ENCODE measurements at regions of chr2 and their contacts with region 1.

Region 1: DNA sequence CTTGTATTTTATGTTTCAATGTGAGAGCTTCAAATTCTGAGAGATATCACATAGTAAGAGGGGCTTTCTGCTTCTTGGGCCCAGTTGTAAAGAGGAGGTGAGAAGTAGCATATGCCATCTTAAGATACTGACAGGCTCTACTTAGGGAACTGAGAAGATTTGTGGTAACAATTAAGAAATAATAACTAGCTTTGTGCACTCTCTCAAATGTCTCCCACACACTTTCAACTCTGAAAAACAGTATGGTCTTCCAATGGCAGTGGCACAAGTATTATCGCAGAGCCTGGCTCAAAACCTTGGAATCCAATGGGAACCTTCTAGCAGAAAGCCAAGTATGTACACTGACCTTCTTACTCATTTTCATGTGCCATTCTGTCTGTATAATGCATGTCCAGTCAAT is 80.3 kb upstream of the FAM237A start:
- DNase-seq: no peak
- H3K4me3 ChIP-seq: no peak overlapping the region
- H3K27ac ChIP-seq: no peak overlapping the region
- H3K4me1 ChIP-seq: peaks cover 41% of the 10 kb centered on the region
- H3K27me3 ChIP-seq: no peaks in the 10 kb centered on the region
- CTCF ChIP-seq: no peak

Region 2: GRCh38 chr2:206392118-206392517 is 169.8 kb before region 1 on chr2:
- CTCF ChIA-PET with region 1: no interaction called
- POLR2A ChIA-PET with region 1: no interaction called
- intact Hi-C with region 1: loop called (anchors 1 kb)
- DNase-seq: peak; percentile 24 to 49
- H3K4me3 ChIP-seq: no peak overlapping the region
- H3K27ac ChIP-seq: no peak overlapping the region
- H3K4me1 ChIP-seq: no peaks in the 10 kb centered on the region
- H3K27me3 ChIP-seq: no peaks in the 10 kb centered on the region
- CTCF ChIP-seq: peak; percentile 65

Region 3: DNA sequence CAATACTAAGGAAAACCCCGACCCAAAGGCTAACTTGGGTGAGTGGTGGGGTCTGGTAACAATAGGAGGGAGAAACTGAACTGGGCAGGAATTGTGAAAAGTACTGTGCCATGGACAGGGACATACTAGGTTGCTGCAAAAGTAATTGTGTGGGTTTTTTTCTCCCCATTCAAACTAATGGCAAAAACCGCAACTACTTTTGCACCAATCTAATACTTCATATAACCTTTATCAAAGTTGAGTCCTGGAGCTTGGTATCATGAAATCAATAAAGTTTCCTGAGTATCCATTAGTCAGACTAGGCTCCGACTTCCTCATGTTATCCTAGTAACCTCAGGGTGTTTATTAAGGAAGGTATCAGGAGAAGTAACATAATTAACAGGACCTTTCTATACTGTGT is 155.5 kb before region 1 on chr2:
- CTCF ChIA-PET with region 1: no interaction called
- POLR2A ChIA-PET with region 1: no interaction called
- intact Hi-C with region 1: no loop called
- DNase-seq: no peak
- H3K4me3 ChIP-seq: no peak overlapping the region
- H3K27ac ChIP-seq: no peak overlapping the region
- H3K4me1 ChIP-seq: no peaks in the 10 kb centered on the region
- H3K27me3 ChIP-seq: no peaks in the 10 kb centered on the region
- CTCF ChIP-seq: no peak

Region 4: GRCh38 chr2:206665251-206665650 is 103.3 kb after region 1 on chr2:
- CTCF ChIA-PET with region 1: no interaction called
- POLR2A ChIA-PET with region 1: no interaction called
- intact Hi-C with region 1: loop called (anchors 10 kb)
- DNase-seq: no peak
- H3K4me3 ChIP-seq: no peak overlapping the region
- H3K27ac ChIP-seq: no peak overlapping the region
- H3K4me1 ChIP-seq: no peaks in the 10 kb centered on the region
- H3K27me3 ChIP-seq: no peaks in the 10 kb centered on the region
- CTCF ChIP-seq: no peak

Region 5: DNA sequence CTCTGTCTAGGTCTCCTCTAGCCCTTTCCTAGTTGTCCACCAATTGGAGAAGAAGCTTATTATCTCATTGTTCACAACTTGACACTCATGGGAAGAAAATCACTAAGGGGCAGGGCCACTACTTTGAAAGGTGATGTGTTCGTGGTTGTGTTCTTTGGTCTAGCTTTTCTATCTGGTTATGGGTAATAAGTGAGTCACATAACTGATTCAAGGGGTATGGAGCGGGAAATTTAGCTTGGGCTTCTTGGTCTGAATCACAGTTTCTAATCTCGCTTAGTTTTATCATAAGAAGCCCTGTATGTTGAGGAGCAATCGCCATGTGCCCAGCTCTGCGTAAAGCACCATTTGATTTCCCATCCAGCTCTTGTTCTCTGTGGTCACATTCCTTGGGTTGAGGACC is 175.0 kb after region 1 on chr2:
- CTCF ChIA-PET with region 1: no interaction called
- POLR2A ChIA-PET with region 1: no interaction called
- intact Hi-C with region 1: no loop called
- DNase-seq: no peak
- H3K4me3 ChIP-seq: no peak overlapping the region
- H3K27ac ChIP-seq: no peak overlapping the region
- H3K4me1 ChIP-seq: no peaks in the 10 kb centered on the region
- H3K27me3 ChIP-seq: no peaks in the 10 kb centered on the region
- CTCF ChIP-seq: no peak

Measured in PC-9 (cell line).